ENCODE measurements at regions of chr20 and their contacts with region 1.

Region 1: GRCh38 chr20:39049684-39050554 is 87.8 kb downstream of the DHX35 start:
- DNase-seq: peak; percentile 80
- ATAC-seq: peak; percentile 87
- H3K4me3 ChIP-seq: peak overlapping the region; percentile 87
- H3K27ac ChIP-seq: no peak overlapping the region
- H3K4me1 ChIP-seq: 0 out of 2 replicates have a peak, but pooled peaks cover 4% of the 10 kb centered on the region
- H3K27me3 ChIP-seq: no peaks in the 10 kb centered on the region
- CTCF ChIP-seq: peak; percentile 93

Region 2: DNA sequence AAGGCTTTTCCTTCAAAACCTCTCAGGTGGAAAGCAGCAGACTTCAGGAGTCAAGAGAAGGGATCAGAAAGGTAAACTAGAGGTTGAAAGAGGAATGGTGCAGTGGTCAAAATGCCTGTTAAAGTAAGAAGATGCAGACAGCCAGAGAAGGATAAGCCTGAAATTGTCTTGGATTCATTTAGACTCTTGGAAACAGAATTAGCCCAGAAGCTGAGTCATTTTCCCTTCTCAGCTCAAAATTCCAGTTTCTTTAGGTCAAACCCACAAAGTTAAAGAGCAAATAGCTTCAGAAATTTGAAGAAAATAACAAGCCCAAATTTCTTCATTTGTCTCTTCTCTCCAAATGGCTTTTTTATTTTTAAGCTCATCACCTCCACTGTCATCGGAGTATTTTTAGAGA is 13.9 kb before region 1 on chr20:
- CTCF ChIA-PET with region 1: interaction called, 10 read pairs
- POLR2A ChIA-PET with region 1: no interaction called
- intact Hi-C with region 1: no loop called
- DNase-seq: no peak
- ATAC-seq: no peak
- H3K4me3 ChIP-seq: no peak overlapping the region
- H3K27ac ChIP-seq: no peak overlapping the region
- H3K4me1 ChIP-seq: no peaks in the 10 kb centered on the region
- H3K27me3 ChIP-seq: no peaks in the 10 kb centered on the region
- CTCF ChIP-seq: no peak

Region 3: DNA sequence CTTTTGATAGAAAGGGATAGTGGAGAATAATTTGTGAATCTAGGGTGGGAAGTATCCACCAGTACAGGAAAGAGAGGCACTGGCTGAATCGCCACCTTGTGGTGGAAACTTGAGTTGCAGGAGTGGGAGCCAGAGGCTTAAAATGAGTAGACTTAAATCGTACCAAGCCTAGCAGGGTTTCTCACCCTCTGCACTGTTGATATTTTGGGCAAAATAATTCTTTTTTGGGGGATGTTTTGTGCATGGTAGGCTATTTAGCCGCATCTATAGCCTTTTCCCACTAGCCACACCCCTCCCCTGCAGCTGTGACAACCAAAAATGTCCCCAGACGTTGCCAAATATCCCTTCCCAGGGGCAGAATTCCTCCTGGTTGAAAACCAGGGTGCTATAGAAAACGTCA is 31.3 kb after region 1 on chr20:
- CTCF ChIA-PET with region 1: interaction called, 6 read pairs
- POLR2A ChIA-PET with region 1: interaction called, 5 read pairs
- intact Hi-C with region 1: loop called (anchors 1 kb)
- DNase-seq: peak; percentile 90
- ATAC-seq: peak; percentile 95
- H3K4me3 ChIP-seq: no peak overlapping the region
- H3K27ac ChIP-seq: no peak overlapping the region
- H3K4me1 ChIP-seq: no peaks in the 10 kb centered on the region
- H3K27me3 ChIP-seq: peaks cover 35% of the 10 kb centered on the region
- CTCF ChIP-seq: peak; percentile 86

Measured in PC-3 (cell line).